ENCODE measurements at regions of chr4 and their contacts with region 1.

Region 1: GRCh38 chr4:141081921-141082395 is 51.3 kb downstream of the RNF150 start:
- DNase-seq: no peak
- H3K4me3 ChIP-seq: no peak overlapping the region
- H3K27ac ChIP-seq: no peak overlapping the region
- H3K4me1 ChIP-seq: no peaks in the 10 kb centered on the region
- H3K27me3 ChIP-seq: no peaks in the 10 kb centered on the region
- CTCF ChIP-seq: no peak

Region 2: GRCh38 chr4:141121768-141122454 is 40.0 kb after region 1 on chr4:
- CTCF ChIA-PET with region 1: no interaction called
- dilution Hi-C with region 1: loop called (anchors 5 kb)
- in situ Hi-C with region 1: no loop called
- intact Hi-C with region 1: no loop called
- DNase-seq: no peak
- H3K4me3 ChIP-seq: no peak overlapping the region
- H3K27ac ChIP-seq: no peak overlapping the region
- H3K4me1 ChIP-seq: no peaks in the 10 kb centered on the region
- H3K27me3 ChIP-seq: no peaks in the 10 kb centered on the region
- CTCF ChIP-seq: no peak

Measured in mammary epithelial cell (primary cell).